Right ventricle myocardium inferior (tissue), 1 donor: ENCODE measurements at regions of chr12 and their contacts with region 1.

Region 1: GRCh38 chr12:76878899-76879709 is at the start of gene CSRP2:
- DNase-seq: peak; percentile 94
- ATAC-seq: peak; percentile 97
- total RNA-seq, gene CSRP2: 55.8 TPM

Region 2: GRCh38 chr12:76810671-76811419 is 68.3 kb before region 1 on chr12:
- intact Hi-C with region 1: no loop called
- DNase-seq: no peak
- ATAC-seq: peak; percentile 23

Region 3: DNA sequence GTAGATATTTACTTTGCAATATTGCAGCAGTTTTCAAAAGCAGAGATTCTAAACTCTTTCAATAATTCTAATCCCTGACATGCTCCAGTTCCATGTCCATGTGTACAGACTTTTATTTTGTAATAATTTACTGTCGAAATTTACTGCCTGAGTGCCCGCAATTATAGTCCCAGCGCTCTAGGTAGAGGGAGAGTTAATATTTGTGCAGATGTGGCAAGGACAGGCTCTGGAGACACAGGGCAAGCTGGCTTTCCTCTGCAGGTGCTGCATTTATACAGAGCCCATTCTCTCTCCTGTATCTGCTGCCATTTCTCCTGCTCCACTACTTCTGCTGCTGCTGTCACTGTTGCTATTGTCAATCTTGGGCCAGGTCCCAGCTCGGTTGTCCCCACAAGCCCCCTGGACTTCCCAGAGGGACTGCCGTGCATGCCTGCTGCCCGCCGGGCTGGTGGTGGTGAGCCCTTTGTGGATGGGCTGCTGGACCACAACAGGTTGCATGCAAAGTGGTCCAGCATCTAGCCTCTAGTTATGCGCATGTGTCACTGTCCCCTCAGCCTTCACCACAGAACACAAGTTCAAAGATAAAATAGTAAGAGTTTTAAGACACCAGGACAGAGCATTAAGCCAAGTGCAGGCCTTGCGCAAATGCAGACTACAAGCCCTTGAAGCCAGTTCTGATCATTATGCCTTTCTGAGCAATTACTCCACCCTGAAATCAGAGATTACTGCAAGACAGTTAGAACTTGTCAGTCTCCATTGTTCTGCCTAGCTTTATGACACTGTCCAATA is 40.5 kb after region 1 on chr12:
- intact Hi-C with region 1: loop called (anchors 5 kb)
- DNase-seq: no peak
- ATAC-seq: no peak

Region 4: GRCh38 chr12:76927170-76927784 is 48.2 kb after region 1 on chr12:
- intact Hi-C with region 1: loop called (anchors 2 kb)
- DNase-seq: no peak
- ATAC-seq: no peak

Region 5: DNA sequence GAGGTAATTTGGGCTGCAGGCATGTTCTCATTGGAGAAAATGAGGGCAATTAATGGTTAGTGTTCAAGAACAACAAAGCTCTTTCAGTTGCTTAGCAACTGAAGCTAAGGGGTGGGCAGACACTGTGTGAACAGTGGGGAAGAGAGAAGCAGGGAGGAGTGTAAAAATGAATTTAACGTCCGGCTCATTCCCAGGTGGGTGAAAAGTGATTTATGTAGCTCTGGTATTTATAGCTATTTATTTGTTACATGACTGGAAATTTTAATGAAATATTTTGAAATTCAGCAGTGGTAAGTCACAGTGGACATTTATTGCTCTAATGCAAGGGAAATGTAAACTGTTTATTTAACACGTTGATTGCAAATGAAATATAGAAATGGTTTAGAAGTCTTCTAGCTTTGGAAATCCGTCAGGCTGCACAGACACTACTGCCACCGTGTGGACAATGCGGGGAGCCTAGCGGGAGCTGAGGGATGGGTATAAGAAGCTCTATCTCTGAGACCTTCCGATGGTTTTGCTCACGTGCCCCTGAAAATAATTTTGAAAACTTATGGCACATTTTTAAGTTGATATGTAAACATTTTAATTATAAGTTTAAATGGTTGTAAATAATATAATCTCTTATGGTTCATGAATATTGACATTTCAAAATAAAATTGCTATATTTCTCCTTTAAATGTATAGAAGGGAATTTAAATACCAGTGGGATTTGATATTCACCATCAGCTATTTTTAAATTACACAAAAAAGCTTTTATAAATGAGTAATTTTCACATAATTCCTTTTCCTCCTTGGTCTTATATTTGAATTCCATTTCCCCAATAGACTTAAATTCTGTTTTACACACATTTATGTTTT is 131.8 kb after region 1 on chr12:
- intact Hi-C with region 1: loop called (anchors 5 kb)
- DNase-seq: peak; percentile 77
- ATAC-seq: peak; percentile 70